GM10248 (cell line): ENCODE measurements at regions of chr14 and their contacts with region 1.

Region 1: DNA sequence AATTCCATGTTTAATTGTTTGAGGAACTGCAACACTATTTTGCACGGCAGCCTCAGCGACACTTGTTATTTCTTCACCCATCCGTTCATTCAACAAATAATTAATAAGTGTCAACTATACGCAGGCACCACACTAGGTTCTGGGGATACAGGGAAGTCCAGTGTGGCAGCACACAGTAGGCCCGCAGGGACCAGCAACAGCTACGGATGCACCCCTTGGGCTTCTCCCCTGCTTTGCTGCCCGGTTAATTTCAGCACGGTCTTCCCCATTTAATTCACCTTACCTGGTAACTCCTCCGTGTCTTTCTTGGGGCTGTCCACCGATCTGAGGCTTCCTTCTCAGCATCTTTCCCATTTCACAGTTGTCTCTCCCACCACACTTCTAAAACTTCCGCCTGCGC is 48.3 kb downstream of the ZFP36L1 start:
- DNase-seq: no peak
- CTCF ChIP-seq: no peak

Region 2: DNA sequence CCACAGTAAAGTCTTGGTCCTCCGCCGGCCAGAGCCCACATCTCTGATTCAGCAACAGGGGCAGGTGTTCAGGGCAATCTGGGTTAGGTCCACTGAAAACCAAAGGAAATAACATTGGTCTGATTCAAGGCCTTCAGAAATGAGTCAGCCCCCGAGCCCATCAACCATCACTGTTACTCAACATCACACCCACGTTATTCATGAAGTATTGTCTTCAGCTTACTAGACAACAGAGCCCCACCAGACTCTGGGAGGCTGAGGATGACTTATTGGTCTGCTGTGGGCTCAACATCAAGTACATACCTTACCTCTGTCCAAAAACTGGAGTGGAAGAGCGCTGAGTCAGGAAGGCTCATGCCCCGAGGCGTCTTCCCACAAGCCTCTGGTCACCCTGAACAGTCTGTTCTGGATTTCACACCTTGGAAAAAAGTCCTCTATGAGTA is 49.3 kb before region 1 on chr14:
- CTCF ChIA-PET with region 1: no interaction called
- POLR2A ChIA-PET with region 1: no interaction called
- DNase-seq: peak; percentile 92
- CTCF ChIP-seq: no peak

Region 3: DNA sequence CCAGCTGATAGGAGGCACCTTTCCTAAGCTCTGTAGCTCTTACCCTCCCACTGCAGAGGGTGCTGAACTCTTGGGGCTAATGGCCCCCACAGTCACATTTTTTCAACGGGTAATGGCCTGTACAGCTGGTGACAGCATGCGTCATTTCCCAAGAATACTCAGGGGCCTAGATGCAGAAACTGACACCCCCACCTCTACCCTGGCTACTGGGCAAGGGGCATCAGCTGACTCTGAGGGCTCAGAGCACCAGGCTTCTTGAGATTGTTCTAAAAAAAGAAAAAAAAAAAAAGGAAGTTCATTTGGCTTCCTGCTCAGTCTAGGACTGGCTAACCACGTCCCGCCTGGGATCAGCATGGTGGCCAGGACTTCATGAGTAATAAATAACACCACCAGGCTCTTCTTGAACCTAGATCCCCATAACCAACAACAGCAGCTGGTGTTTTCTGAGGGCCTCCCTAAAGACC is 13.0 kb after region 1 on chr14:
- CTCF ChIA-PET with region 1: interaction called, 11 read pairs
- POLR2A ChIA-PET with region 1: no interaction called
- DNase-seq: no peak
- CTCF ChIP-seq: no peak